ENCODE measurements at regions of chr2 and their contacts with region 1.

Region 1: DNA sequence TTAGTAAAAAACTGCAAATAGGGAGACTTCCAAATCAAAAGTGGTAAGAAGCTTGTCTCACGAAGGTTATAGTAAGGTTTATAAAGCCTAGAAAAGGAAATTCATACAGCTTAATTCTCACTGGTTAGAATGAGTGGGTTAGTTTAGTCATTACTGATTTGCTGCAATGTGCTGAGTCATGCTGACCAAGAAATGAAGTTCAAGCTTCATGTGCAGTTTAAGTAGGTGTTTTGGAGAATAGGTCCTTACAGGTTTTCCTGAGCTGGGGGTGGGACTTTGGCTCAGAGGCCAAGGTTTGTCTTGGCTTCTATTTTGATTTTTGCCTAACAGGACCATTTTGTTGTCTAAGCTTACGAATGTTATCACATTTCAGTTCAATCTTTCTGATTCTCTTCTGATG is 15.1 kb downstream of the CLIP4 start:
- DNase-seq: no peak
- ATAC-seq: peak; percentile 90
- H3K4me3 ChIP-seq: peak overlapping the region; percentile 27; the same call in 1 of the 2 replicates
- H3K27ac ChIP-seq: peak overlapping the region; percentile 73
- H3K4me1 ChIP-seq: peaks cover 10% of the 10 kb centered on the region
- H3K27me3 ChIP-seq: no peaks in the 10 kb centered on the region
- CTCF ChIP-seq: no peak
- EP300 ChIP-seq: no peak
- POLR2A ChIP-seq: no peak
- RAD21 ChIP-seq: no peak

Region 2: DNA sequence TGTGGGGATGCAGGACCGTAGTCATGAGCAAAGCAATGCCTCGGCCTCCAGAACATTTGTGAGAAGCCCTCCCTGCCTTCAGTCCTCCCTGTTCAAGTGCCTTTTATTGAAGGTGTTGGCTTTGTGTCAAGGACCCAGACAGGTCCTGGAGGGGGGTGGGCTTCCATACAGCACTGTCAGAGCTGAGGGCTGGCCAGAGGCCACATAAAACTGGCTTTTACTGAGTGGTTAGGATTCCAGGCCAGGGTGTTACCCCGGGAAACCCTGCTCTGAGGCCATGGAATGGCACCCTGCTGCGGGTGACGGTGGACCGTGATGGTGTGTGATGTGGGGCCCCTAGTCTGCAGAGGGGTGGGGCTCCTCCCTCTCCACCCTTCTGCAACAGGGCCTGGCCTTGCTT is 107.6 kb before region 1 on chr2:
- CTCF ChIA-PET with region 1: no interaction called
- POLR2A ChIA-PET with region 1: no interaction called
- RAD21 ChIA-PET with region 1: no interaction called
- SMC1A ChIA-PET with region 1: no interaction called
- in situ Hi-C with region 1: no loop called
- intact Hi-C with region 1: no loop called
- DNase-seq: no peak
- ATAC-seq: no peak
- H3K4me3 ChIP-seq: no peak overlapping the region
- H3K27ac ChIP-seq: no peak overlapping the region
- H3K4me1 ChIP-seq: no peaks in the 10 kb centered on the region
- H3K27me3 ChIP-seq: 0 out of 4 replicates have a peak, but pooled peaks cover 0 to 3% of the 10 kb centered on the region in 2 experiments
- CTCF ChIP-seq: no peak
- EP300 ChIP-seq: no peak
- POLR2A ChIP-seq: no peak
- RAD21 ChIP-seq: no peak

Region 3: GRCh38 chr2:29075894-29076705 is 54.2 kb before region 1 on chr2:
- CTCF ChIA-PET with region 1: no interaction called
- POLR2A ChIA-PET with region 1: no interaction called
- RAD21 ChIA-PET with region 1: no interaction called
- SMC1A ChIA-PET with region 1: interaction called, 10 read pairs
- in situ Hi-C with region 1: no loop called
- intact Hi-C with region 1: no loop called
- DNase-seq: no peak
- ATAC-seq: no peak
- H3K4me3 ChIP-seq: no peak overlapping the region
- H3K27ac ChIP-seq: no peak overlapping the region
- H3K4me1 ChIP-seq: peaks cover 3% of the 10 kb centered on the region; the same call in 1 of the 2 replicates
- H3K27me3 ChIP-seq: no peaks in the 10 kb centered on the region
- CTCF ChIP-seq: no peak
- EP300 ChIP-seq: no peak
- POLR2A ChIP-seq: no peak
- RAD21 ChIP-seq: no peak

Region 4: DNA sequence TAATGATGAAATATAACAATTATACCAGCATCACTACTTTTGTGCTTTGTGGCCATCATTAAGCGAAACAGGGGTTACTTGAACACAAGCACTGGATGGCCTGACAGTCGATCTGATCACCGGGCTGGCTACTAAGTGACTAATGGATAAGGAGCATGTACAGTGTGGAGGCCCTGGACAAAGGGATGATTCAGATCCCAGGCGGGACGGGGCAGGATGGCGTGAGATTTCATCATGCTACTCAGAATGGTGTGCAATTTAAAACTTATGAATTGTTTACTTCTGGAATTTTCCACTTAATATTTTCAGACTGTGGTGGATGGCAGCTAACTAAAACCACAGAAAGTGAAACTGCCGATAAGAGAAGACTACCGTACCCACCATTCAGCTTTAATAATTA is 22.1 kb before region 1 on chr2:
- CTCF ChIA-PET with region 1: interaction called, 6 read pairs
- POLR2A ChIA-PET with region 1: interaction called, 11 read pairs
- RAD21 ChIA-PET with region 1: interaction called, 4 read pairs
- SMC1A ChIA-PET with region 1: interaction called, 10 read pairs
- in situ Hi-C with region 1: no loop called
- intact Hi-C with region 1: no loop called
- DNase-seq: no peak
- ATAC-seq: no peak
- H3K4me3 ChIP-seq: no peak overlapping the region
- H3K27ac ChIP-seq: no peak overlapping the region; the same call in 1 of the 2 replicates
- H3K4me1 ChIP-seq: peaks cover 32% of the 10 kb centered on the region
- H3K27me3 ChIP-seq: no peaks in the 10 kb centered on the region
- CTCF ChIP-seq: no peak
- EP300 ChIP-seq: no peak
- POLR2A ChIP-seq: no peak
- RAD21 ChIP-seq: no peak

Region 5: DNA sequence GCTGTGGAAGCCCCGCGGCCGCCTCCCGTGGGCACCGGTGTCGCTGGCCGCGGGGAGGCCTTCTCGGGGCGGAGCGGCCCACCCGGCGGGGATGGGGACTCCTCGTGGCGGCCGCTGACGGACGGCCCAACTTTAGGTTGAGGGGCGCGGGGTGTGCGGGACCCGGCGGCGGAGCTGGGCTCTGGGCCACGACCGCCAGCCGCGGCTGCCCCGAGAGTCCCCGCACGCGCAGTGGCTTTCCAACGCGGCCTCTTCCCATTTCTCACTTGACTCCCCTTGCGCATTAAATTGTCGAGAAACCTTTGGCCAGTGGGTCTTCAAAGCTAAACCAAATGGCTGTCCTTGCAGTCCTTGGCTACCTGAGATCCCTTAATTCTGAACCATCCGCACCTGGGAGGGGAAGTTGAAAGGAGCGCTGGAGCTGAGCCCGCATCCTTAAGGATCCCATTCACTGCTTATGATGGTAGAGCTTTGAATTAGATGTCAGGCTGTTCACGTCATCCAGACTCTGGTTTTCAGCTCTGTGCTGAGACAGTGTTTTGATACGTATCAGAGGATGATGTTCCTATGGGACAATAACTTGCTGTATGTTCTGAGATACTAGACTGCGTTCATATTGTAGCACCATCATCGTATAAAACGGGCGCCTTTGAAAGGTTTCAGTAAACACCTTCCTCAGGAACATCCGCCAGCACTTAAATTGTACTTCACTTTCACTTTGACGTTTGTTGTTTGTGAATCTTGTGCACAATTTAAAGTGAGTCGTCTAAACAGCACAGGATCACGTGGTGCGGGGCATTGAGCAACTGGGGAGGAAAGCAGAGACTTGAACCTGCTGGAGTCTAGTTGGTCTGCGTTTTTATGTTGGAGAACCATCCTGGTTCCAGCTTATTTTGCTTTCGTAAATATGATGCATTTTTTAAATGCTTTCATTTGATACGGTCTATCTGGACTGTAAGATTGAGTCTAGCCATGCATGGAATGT is 14.2 kb before region 1 on chr2:
- CTCF ChIA-PET with region 1: interaction called, 39 read pairs
- POLR2A ChIA-PET with region 1: interaction called, 21 read pairs
- RAD21 ChIA-PET with region 1: interaction called, 31 read pairs
- SMC1A ChIA-PET with region 1: interaction called, 73 read pairs
- in situ Hi-C with region 1: no loop called
- intact Hi-C with region 1: no loop called
- DNase-seq: peak; percentile 78
- ATAC-seq: peak; percentile 64
- H3K4me3 ChIP-seq: peak overlapping the region; percentile 86
- H3K27ac ChIP-seq: peak overlapping the region; percentile 83
- H3K4me1 ChIP-seq: peaks cover 32% of the 10 kb centered on the region
- H3K27me3 ChIP-seq: no peaks in the 10 kb centered on the region
- CTCF ChIP-seq: no peak
- EP300 ChIP-seq: no peak
- POLR2A ChIP-seq: peak; percentile 51; the same call in 1 of the 2 replicates
- RAD21 ChIP-seq: no peak

Region 6: DNA sequence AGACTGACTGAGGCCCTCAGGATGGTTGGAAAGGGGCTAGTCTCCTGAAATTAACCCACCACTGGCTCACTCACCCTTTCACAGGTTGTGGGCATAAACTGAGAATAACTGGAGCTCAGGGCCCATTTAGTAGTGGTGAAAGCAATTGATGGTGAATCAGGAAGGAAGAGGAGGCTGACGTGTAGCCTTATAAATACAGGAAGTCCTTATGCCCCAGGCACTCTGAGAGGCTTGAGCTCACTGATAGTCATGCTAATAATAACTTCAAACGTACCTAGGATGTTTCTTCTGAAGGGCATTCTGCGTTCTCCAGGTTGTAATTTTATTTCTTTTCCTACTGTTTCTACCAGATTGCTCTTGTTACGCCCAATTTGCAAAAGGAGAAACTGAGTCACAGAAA is 313.3 kb after region 1 on chr2:
- CTCF ChIA-PET with region 1: no interaction called
- POLR2A ChIA-PET with region 1: no interaction called
- RAD21 ChIA-PET with region 1: no interaction called
- SMC1A ChIA-PET with region 1: no interaction called
- in situ Hi-C with region 1: no loop called
- intact Hi-C with region 1: no loop called
- DNase-seq: no peak
- ATAC-seq: no peak
- H3K4me3 ChIP-seq: no peak overlapping the region
- H3K27ac ChIP-seq: no peak overlapping the region
- H3K4me1 ChIP-seq: no peaks in the 10 kb centered on the region; the same call in 1 of the 2 replicates
- H3K27me3 ChIP-seq: no peaks in the 10 kb centered on the region
- CTCF ChIP-seq: no peak
- EP300 ChIP-seq: no peak
- POLR2A ChIP-seq: no peak
- RAD21 ChIP-seq: no peak